ENCODE measurements at regions of chr2 and their contacts with region 1.

Region 1: DNA sequence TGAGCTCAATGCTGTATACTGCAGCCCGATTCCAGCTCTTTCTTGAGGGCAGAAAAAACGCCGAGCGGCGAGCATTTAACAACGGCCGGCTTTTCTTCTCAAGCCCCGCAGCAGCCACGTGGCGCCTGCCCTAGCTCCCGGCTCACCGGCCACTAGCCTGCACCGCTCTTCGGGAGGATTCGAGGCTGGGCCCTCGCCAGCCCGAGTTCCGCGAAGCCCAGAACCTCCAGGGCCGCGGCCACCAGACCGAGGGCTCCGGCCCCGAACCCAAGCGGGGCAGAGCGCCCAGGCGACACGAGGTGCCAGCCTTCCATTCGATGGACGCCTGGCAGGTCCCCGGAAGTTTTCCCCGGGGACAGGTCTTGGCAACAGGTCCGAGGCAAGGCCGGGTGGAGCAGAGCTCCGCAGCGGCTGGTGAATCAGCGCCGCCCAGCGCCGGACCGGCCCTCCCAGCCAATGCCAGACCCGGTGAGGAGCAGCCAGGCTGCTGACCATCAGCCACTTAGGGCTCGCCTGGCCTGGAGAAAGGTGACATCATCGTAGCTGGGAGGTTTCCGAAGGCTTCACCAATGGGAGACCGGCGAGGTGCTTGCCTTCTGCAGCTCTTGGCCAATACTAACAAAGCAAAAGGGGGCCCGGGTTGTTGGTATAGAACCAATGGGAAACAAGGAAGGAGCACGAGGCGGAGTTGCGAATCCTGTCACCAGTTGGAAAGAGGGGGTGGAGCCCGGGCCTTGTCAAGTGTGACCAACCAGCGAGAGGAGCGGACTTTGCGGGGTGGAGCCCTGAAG is 544 bp upstream of the MXD1 start:
- DNase-seq: peak; percentile 100
- ATAC-seq: peak; percentile 93
- H3K4me3 Mint-ChIP-seq: peak overlapping the region; percentile 71
- H3K27ac Mint-ChIP-seq: peak overlapping the region; percentile 70
- H3K4me1 Mint-ChIP-seq: peaks cover 4% of the 10 kb centered on the region; the same call in 1 of the 2 replicates
- H3K27me3 Mint-ChIP-seq: no peaks in the 10 kb centered on the region
- CTCF ChIP-seq: no peak

Region 2: DNA sequence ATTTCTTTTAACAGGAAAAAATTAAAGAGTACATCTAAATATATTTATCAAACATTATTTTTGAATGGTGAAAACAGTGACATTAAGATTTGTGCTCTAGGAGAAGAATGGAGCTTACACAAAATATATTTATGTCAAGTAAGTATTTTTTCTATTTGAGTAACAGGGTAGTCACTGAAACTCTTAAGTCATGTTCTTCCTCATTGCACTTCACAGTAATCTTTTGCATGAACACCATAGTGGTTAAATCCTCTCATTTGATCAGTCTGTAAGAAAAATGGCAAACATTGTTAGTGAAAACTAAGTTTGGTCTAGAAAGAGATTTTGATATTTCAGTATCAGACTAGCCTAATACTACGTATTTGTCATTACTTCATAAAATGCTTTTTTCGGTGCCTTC is 76.8 kb before region 1 on chr2:
- CTCF ChIA-PET with region 1: no interaction called
- POLR2A ChIA-PET with region 1: no interaction called
- DNase-seq: no peak
- ATAC-seq: no peak
- H3K4me3 Mint-ChIP-seq: no peak overlapping the region
- H3K27ac Mint-ChIP-seq: no peak overlapping the region
- H3K4me1 Mint-ChIP-seq: no peaks in the 10 kb centered on the region
- H3K27me3 Mint-ChIP-seq: no peaks in the 10 kb centered on the region
- CTCF ChIP-seq: no peak

Region 3: DNA sequence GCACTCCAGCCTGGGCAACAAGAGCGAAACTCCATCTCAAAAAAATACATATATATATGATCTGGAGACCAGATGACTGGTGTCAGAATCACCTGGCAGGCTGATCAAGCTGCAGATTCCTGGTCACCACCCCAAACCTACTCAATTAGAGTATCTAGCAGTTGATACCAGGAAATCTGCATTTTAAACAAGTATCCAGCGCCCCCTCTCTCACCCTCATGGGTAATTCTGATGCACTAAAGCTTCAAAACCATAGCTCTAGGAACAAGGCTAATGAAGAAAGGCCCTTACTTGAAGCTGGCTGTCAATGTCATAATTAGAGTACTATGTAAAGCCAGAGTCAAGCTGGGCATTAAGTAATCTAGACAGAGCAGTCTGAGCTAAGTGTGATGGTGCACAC is 147.9 kb after region 1 on chr2:
- CTCF ChIA-PET with region 1: interaction called, 20 read pairs
- POLR2A ChIA-PET with region 1: interaction called, 8 read pairs
- DNase-seq: no peak
- ATAC-seq: no peak
- H3K4me3 Mint-ChIP-seq: no peak overlapping the region
- H3K27ac Mint-ChIP-seq: no peak overlapping the region
- H3K4me1 Mint-ChIP-seq: no peaks in the 10 kb centered on the region
- H3K27me3 Mint-ChIP-seq: no peaks in the 10 kb centered on the region
- CTCF ChIP-seq: no peak

Region 4: GRCh38 chr2:70086838-70087701 is 172.7 kb after region 1 on chr2 and contains the start of gene PCBP1:
- CTCF ChIA-PET with region 1: interaction called, 11 read pairs
- POLR2A ChIA-PET with region 1: interaction called, 67 read pairs
- DNase-seq: peak; percentile 89
- ATAC-seq: peak; percentile 15
- H3K4me3 Mint-ChIP-seq: peak within 1 kb of the TSS; percentile 97
- H3K27ac Mint-ChIP-seq: peak within 1 kb of the TSS; percentile 100
- H3K4me1 Mint-ChIP-seq: peaks cover 44% of the 10 kb centered on the region
- H3K27me3 Mint-ChIP-seq: no peaks in the 10 kb centered on the region; the same call in 1 of the 2 replicates
- CTCF ChIP-seq: no peak
- total RNA-seq, gene PCBP1: 489 to 528 TPM (median 518 TPM) in 3 replicates

Region 5: DNA sequence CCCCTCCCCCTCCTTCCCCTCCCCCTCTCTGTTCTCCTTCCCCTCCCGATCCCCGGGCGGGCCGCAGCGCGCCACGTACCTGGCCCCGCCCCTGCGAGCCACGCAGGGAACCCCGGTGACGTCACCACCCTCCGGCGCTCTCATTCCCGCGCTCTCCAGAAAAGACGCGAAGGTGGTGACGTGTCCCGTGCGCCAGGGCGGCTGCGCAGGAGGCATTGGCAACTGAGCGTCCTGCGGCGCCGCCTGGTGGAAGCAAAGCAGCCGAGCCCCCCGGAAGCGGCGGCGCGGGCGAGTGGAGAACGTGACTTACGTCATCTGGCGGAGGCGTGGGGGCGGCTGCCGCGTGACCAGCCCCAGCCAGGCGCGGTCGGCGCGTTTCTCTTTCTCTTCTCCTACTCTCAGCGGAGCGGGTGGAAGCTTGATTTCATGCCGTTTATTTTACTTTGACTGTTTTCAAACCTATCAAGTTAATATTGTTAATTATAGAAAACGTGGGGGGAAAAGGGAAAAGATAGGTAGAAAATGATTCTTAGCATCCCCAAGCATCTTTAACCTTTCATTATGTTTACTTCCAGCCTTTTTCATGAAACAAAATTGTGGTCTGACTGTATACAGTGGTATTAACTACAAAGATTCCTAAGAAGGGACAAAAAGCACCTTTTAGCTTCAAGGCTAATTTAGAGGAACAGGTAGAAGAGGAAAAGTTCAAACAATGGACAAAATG is 228.4 kb after region 1 on chr2:
- CTCF ChIA-PET with region 1: interaction called, 12 read pairs
- POLR2A ChIA-PET with region 1: interaction called, 32 read pairs
- DNase-seq: peak; percentile 99
- ATAC-seq: peak; percentile 71
- H3K4me3 Mint-ChIP-seq: peak overlapping the region; percentile 63
- H3K27ac Mint-ChIP-seq: peak overlapping the region; percentile 98
- H3K4me1 Mint-ChIP-seq: peaks cover 37% of the 10 kb centered on the region
- H3K27me3 Mint-ChIP-seq: no peaks in the 10 kb centered on the region
- CTCF ChIP-seq: peak; percentile 77

Region 6: DNA sequence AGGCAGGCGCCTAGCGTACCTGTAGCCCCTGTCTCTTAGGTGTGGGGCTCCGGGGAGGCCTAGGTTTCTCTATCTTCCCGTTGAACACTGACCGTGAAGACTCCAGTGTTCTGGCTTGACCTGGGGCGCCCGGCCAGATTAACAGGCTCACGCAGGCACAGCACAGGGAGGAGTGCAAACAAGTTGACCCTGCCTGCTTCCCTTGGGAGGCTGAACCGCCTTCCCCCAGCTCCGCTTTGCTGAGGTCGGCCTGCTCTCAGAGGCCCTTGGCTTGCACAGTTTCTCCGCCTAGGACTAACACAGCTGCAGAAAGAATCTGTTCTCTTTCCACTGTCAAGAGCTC is 344.1 kb after region 1 on chr2:
- CTCF ChIA-PET with region 1: no interaction called
- POLR2A ChIA-PET with region 1: interaction called, 15 read pairs
- DNase-seq: peak; percentile 42
- ATAC-seq: peak; percentile 4
- H3K4me3 Mint-ChIP-seq: peak overlapping the region; percentile 82
- H3K27ac Mint-ChIP-seq: no peak overlapping the region
- H3K4me1 Mint-ChIP-seq: peaks cover 15% of the 10 kb centered on the region
- H3K27me3 Mint-ChIP-seq: no peaks in the 10 kb centered on the region
- CTCF ChIP-seq: no peak